HCT116 (cell line): ENCODE measurements at regions of chr4 and their contacts with region 1.

Region 1: GRCh38 chr4:143482840-143483239 is 30.7 kb upstream of the SMARCA5 start:
- DNase-seq: peak; percentile 28
- ATAC-seq: peak; percentile 42; the same call in 1 of the 2 replicates
- H3K4me3 ChIP-seq: no peak overlapping the region
- H3K27ac ChIP-seq: no peak overlapping the region
- H3K4me1 ChIP-seq: no peaks in the 10 kb centered on the region
- H3K27me3 ChIP-seq: no peaks in the 10 kb centered on the region
- CTCF ChIP-seq: peak; percentile 37 to 73 (median 64); a peak in 5 of 6 replicates
- POLR2A ChIP-seq: no peak
- RAD21 ChIP-seq: peak; percentile 87

Region 2: GRCh38 chr4:142883040-142883832 is 599.6 kb before region 1 on chr4:
- CTCF ChIA-PET with region 1: no interaction called
- POLR2A ChIA-PET with region 1: no interaction called
- RAD21 ChIA-PET with region 1: no interaction called
- intact Hi-C with region 1: loop called (anchors 5 kb)
- DNase-seq: peak; percentile 12
- ATAC-seq: peak; percentile 72
- H3K4me3 ChIP-seq: no peak overlapping the region
- H3K27ac ChIP-seq: no peak overlapping the region
- H3K4me1 ChIP-seq: no peaks in the 10 kb centered on the region
- H3K27me3 ChIP-seq: no peaks in the 10 kb centered on the region
- CTCF ChIP-seq: peak; percentile 15 to 56 (median 39); a peak in 5 of 6 replicates
- POLR2A ChIP-seq: no peak
- RAD21 ChIP-seq: peak; percentile 53

Region 3: DNA sequence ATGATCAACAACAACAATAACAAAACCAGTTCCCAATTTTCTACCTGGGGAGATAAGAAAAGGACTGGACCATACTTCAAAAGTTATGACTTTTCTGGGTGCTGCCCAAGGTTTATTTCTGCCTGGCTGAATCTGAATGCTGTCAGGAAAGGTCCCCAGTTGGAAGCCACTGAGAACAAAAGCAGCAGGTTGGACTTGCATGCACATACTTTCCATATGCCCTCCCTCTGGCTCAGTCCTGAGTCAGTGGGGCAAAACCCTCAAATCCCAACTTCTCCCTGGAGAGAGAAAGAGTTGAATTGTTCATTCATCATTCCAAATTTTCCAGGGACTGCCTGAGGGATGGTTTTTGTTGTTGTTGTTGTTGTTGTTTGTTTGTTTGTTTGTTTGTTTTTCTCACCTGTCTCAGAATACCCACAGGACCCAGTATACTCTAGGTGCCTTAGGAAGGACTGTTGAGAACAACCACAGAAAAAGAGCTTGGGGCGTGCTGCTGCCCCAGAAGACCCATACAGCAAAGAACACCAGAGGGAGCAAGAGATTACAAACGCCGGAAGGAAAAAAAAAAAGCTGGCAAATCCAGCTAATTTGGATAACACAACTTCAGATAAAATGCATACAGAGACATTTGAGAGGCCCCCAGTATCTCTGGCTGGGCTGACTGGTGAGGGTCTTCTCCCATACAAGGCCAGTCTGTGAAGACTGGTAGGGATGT is 497.8 kb before region 1 on chr4:
- CTCF ChIA-PET with region 1: interaction called, 3 read pairs
- POLR2A ChIA-PET with region 1: no interaction called
- RAD21 ChIA-PET with region 1: no interaction called
- intact Hi-C with region 1: loop called (anchors 2 kb)
- DNase-seq: peak; percentile 40
- ATAC-seq: peak; percentile 96
- H3K4me3 ChIP-seq: no peak overlapping the region
- H3K27ac ChIP-seq: no peak overlapping the region
- H3K4me1 ChIP-seq: no peaks in the 10 kb centered on the region
- H3K27me3 ChIP-seq: no peaks in the 10 kb centered on the region
- CTCF ChIP-seq: peak; percentile 57 to 66 (median 62); a peak in 5 of 6 replicates
- POLR2A ChIP-seq: no peak
- RAD21 ChIP-seq: peak; percentile 66

Region 4: GRCh38 chr4:143207557-143207956 is 275.3 kb before region 1 on chr4:
- CTCF ChIA-PET with region 1: interaction called, 4 read pairs
- POLR2A ChIA-PET with region 1: no interaction called
- RAD21 ChIA-PET with region 1: no interaction called
- intact Hi-C with region 1: loop called (anchors 1 kb)
- DNase-seq: no peak
- ATAC-seq: no peak
- H3K4me3 ChIP-seq: no peak overlapping the region
- H3K27ac ChIP-seq: no peak overlapping the region
- H3K4me1 ChIP-seq: no peaks in the 10 kb centered on the region
- H3K27me3 ChIP-seq: no peaks in the 10 kb centered on the region
- CTCF ChIP-seq: peak in 2 of 3 experiments; percentile 7 to 20; a peak in 2 of 6 replicates
- POLR2A ChIP-seq: no peak
- RAD21 ChIP-seq: peak; percentile 17; the same call in 1 of the 2 replicates

Region 5: DNA sequence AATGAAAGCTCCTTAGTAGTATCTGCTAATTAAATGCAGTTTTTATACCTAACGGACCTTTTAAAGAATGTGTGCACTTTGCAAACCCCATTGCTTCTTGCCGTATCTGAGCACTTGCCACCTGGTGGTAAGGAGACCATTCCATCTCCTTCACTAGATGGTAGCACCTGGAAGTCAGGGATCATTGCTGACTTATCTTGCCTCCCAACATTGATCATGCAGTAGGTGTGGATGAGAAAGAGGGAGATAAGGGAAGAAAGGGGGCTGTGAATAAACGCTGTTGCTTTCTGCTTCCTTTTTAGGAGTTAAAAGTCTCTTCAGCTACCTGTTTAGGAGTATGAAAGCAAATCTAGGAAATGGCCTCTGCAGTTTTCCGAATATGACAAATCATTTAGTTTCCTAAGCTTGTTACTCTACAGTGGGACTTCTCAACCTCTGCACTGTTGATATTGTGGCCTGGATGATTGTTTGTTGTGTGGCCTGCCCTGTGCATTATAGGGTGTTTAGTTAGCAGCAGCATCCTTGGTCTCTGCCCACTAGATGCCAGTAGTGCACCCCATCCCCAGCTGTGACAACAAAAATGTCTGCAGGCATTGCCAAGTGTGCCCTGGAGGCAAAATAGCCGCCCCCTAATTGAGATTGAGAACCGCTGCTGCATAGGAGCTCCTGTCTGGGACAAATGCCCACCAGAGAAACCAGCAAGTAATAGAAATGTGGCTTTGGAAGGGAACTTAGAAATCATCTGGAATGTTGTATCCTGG is 107.3 kb before region 1 on chr4:
- CTCF ChIA-PET with region 1: no interaction called
- POLR2A ChIA-PET with region 1: no interaction called
- RAD21 ChIA-PET with region 1: no interaction called
- intact Hi-C with region 1: loop called (anchors 2 kb)
- DNase-seq: peak; percentile 6
- ATAC-seq: peak; percentile 97
- H3K4me3 ChIP-seq: no peak overlapping the region
- H3K27ac ChIP-seq: no peak overlapping the region
- H3K4me1 ChIP-seq: no peaks in the 10 kb centered on the region
- H3K27me3 ChIP-seq: no peaks in the 10 kb centered on the region
- CTCF ChIP-seq: peak in 2 of 3 experiments; percentile 49 to 50; a peak in 4 of 6 replicates
- POLR2A ChIP-seq: no peak
- RAD21 ChIP-seq: peak; percentile 46; the same call in 1 of the 2 replicates

Region 6: DNA sequence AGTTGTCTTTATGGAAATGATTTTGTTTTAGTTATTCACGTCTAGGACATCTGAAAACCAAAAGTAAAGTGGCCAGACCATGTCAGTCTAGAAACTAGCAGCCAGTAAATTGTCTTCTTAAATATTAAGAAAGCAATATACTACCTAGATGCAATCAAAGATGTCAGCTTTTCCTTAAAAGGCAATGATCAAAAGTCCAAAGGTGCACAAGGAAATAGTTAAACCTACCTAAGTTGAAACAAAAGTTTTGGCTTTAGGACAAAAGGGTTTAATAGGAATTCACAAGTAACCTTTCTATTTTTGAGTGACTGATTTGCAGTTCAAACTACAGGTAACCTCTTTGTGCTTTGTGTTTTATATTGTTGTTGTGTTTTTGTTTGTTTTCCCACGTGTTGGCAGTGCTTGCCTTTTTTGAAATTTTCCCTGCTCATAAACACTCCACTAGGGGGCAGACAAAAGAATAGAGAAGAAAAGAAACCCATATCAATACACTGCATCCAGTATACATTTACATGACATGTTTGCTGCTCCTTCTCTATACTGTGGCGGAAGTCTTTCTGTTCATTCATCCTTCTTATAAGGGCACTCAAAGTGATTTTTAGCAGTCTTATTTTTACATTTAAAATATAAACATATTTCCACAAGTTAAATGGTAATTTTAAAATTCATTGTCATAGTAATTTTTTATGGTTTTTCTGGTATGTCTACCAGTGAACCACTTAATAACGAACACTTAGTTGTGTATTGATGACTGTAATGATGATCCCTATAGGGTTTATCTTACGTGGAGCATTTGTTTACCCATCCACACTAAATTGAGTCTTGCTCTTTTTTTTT is 83.5 kb before region 1 on chr4:
- CTCF ChIA-PET with region 1: no interaction called
- POLR2A ChIA-PET with region 1: no interaction called
- RAD21 ChIA-PET with region 1: no interaction called
- intact Hi-C with region 1: loop called (anchors 5 kb)
- DNase-seq: peak; percentile 50
- ATAC-seq: peak; percentile 74
- H3K4me3 ChIP-seq: no peak overlapping the region
- H3K27ac ChIP-seq: no peak overlapping the region
- H3K4me1 ChIP-seq: peaks cover 2 to 6% of the 10 kb centered on the region in 2 experiments; a peak in 2 of 4 replicates
- H3K27me3 ChIP-seq: no peaks in the 10 kb centered on the region
- CTCF ChIP-seq: peak; percentile 66 to 80 (median 75); a peak in 5 of 6 replicates
- POLR2A ChIP-seq: no peak
- RAD21 ChIP-seq: peak; percentile 51; the same call in 1 of the 2 replicates

Region 7: DNA sequence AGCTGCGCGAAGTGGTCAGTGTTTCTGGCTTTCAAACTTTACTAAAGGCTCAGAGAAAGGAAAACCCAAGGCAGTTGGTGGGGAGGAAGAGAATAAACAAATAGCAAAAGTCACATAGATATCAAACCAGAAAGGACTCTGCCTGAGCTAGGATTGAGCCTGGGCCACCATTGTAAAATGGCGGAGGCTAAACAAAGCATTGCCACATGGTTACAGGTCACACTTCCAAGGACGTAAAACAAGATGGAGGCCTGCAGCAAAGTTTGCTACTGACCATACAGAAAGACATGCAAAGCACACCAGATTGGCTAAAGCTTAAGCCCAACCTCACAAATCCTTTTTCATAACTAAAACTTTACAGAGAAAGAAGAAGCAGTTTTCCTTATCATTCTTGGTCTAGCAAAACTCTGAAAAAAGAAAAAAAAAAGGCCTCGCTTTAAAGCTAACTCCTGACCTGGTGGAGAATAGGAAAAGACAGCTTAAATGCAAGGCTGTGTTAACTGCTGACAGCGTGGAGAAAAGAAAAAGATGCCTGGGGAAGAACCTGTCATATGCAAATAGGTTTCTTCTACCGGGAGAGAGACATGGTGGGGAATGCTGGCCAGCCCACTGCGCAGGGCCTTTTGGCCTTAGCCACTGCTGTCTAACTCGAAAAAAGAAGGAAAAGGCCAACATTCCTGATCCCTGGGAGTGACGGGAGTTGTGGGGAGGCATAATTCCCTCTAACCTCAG is 51.1 kb before region 1 on chr4:
- CTCF ChIA-PET with region 1: no interaction called
- POLR2A ChIA-PET with region 1: no interaction called
- RAD21 ChIA-PET with region 1: no interaction called
- intact Hi-C with region 1: no loop called
- DNase-seq: no peak
- ATAC-seq: no peak
- H3K4me3 ChIP-seq: no peak overlapping the region
- H3K27ac ChIP-seq: no peak overlapping the region
- H3K4me1 ChIP-seq: no peaks in the 10 kb centered on the region
- H3K27me3 ChIP-seq: no peaks in the 10 kb centered on the region
- CTCF ChIP-seq: no peak
- POLR2A ChIP-seq: no peak
- RAD21 ChIP-seq: no peak